ENCODE measurements at regions of chr2 and their contacts with region 1.

Region 1: GRCh38 chr2:47767880-47768609 is 14.9 kb upstream of the MSH6 start:
- DNase-seq: no peak
- H3K4me3 ChIP-seq: no peak overlapping the region; the same call in 1 of the 2 replicates
- CTCF ChIP-seq: peak; percentile 99

Region 2: DNA sequence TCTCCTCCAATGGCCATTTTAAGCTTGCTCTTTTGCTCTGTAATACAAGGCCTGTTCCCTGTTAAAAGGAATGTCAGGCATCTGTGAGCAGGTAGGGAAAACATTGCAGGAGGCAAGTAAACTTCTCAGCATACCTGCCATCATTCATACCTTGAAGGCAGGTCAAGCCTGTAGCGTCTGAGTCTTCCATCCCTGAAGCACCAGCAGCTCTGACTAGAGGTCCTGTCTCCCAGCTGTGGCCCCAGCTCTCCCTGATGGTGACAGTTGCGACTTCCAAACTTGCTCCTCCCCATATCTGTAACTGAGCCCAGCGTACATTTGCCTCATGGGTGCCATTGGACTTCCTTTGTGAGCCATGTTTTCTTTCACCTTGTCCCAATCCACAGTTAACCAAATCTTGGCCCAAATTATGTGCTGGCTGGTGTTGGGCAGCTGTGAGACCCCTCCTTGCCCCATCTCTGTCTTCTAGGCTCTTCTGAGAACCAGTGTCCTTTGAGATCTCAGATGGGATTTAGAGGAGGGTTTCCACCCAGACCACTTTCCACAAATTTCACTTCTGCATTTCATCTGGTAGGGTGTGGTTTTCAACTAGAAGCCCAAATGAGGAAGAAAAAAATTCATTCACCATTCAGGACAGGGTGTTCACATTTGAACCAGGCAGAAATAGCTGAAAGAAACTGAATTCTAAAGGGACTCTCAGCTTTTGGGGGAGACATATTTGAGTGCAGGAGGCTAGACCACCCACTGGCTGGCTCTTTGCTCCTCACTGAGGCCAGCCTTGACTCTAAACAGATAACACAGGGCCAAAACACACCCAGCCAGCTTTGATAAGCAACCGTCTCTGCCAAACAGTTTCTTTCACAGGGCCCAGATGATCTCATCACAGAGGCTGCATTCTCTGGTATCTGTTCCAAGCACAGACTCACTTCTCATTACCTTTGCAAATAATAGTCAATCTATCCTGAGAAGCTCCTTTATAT is 431.5 kb before region 1 on chr2:
- CTCF ChIA-PET with region 1: interaction called, 136 read pairs
- POLR2A ChIA-PET with region 1: no interaction called
- DNase-seq: no peak
- H3K4me3 ChIP-seq: no peak overlapping the region
- CTCF ChIP-seq: no peak

Region 3: GRCh38 chr2:47386551-47386950 is 381.5 kb before region 1 on chr2:
- CTCF ChIA-PET with region 1: interaction called, 22 read pairs
- POLR2A ChIA-PET with region 1: no interaction called
- DNase-seq: no peak
- H3K4me3 ChIP-seq: no peak overlapping the region
- CTCF ChIP-seq: no peak

Region 4: DNA sequence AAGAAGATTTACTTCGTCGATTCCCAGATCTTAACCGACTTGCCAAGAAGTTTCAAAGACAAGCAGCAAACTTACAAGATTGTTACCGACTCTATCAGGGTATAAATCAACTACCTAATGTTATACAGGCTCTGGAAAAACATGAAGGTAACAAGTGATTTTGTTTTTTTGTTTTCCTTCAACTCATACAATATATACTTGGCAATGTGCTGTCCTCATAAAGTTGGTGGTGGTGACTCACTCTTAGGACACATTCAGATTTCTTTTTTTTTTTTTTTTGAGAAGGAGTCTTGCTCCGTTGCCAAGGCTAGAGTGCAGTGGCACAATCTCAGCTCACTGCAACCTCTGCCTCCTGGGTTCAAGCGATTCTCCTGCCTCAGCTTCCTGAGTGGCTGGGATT is 338.2 kb before region 1 on chr2:
- CTCF ChIA-PET with region 1: interaction called, 276 read pairs
- POLR2A ChIA-PET with region 1: no interaction called
- DNase-seq: no peak
- H3K4me3 ChIP-seq: no peak overlapping the region
- CTCF ChIP-seq: no peak

Region 5: DNA sequence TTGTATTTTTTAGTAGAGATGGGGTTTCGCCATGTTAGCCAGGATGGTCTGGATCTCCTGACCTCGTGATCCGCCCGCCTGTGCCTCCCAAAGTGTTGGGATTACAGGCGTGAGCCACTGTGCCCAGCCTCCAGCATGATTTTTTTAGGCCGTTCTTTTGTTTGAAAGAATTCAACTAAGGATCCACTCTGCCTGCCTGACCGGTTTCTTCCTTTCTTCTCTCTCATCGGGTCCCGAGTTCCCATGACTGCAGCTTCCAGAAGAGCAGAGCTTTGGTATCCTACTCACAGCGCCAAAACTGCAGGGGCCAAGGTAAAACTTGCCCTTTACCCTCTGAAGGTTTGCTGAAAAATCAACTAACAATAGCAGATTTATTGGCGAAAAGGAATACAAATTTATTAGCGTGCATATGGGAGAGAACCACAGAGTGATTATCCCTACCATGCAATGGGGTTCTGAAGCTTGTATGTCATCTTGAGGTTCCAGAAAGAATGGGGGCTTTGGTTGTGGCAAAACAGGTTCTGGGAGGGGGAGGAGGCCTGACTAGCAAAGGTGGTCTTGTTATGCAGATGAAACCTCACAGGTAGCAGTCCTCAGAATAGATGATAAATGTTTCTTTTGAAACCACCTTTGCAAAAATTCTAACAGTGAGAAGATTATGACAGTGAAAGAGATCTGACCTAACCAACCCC is 72.1 kb before region 1 on chr2:
- CTCF ChIA-PET with region 1: no interaction called
- POLR2A ChIA-PET with region 1: no interaction called
- DNase-seq: no peak
- H3K4me3 ChIP-seq: no peak overlapping the region
- CTCF ChIP-seq: no peak

Region 6: GRCh38 chr2:47782671-47783485 is 14.8 kb after region 1 on chr2 and contains the start of gene MSH6:
- CTCF ChIA-PET with region 1: interaction called, 39 read pairs
- POLR2A ChIA-PET with region 1: no interaction called
- DNase-seq: peak; percentile 10
- H3K4me3 ChIP-seq: peak within 1 kb of the TSS; percentile 93
- CTCF ChIP-seq: no peak

Measured in AG04449 (cell line).